Tibial artery (tissue), 4 donors: ENCODE measurements at regions of chr15 and their contacts with region 1.

Region 1: GRCh38 chr15:60682115-60682514 is 203.2 kb upstream of the ICE2 start:
- DNase-seq: no peak
- H3K4me3 ChIP-seq: no peak overlapping the region
- H3K27ac ChIP-seq: peak overlapping the region; percentile 40 to 55
- H3K4me1 ChIP-seq: peaks cover 0 to 27% (median 11%) of the 10 kb centered on the region in 4 donors
- H3K27me3 ChIP-seq: no peaks in the 10 kb centered on the region
- CTCF ChIP-seq: no peak

Region 2: GRCh38 chr15:61248790-61249189 is 566.7 kb after region 1 on chr15:
- intact Hi-C with region 1: loop called (anchors 5 kb)
- DNase-seq: no peak
- H3K4me3 ChIP-seq: no peak overlapping the region
- H3K27ac ChIP-seq: no peak overlapping the region
- H3K4me1 ChIP-seq: no peaks in the 10 kb centered on the region
- H3K27me3 ChIP-seq: peaks cover 0 to 4% of the 10 kb centered on the region in 2 donors
- CTCF ChIP-seq: no peak